Motor neuron (in vitro differentiated cells): ENCODE measurements at regions of chr11 and their contacts with region 1.

Region 1: DNA sequence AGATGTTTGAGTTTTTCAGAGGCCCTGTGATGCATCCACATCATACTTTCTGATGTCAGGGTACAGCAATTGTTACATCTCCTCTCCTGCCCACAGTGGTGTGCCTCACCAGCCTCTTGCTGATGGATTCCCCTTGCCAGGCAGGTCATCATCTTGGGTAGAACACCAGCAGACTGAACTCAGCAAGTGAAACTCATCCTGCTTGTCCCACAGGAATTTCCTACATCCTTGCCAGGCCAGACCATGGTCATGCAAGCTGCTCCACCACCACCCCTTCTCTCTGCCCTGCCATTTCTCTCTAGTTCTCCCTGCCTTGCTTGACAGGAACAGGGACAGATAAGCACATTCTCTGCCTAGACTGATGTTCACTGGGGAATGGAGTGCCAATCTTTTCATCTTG is 85.9 kb downstream of the PAX6 start:
- ATAC-seq: no peak
- H3K4me3 ChIP-seq: no peak overlapping the region
- H3K27ac ChIP-seq: no peak overlapping the region
- H3K4me1 ChIP-seq: peaks cover 0 to 2% of the 10 kb centered on the region in 2 donors

Region 2: GRCh38 chr11:31641477-31642062 is 83.6 kb before region 1 on chr11:
- in situ Hi-C with region 1: loop called in 1 of 9 experiments (anchors 25 kb)
- ATAC-seq: no peak
- H3K4me3 ChIP-seq: no peak overlapping the region
- H3K27ac ChIP-seq: no peak overlapping the region
- H3K4me1 ChIP-seq: peaks cover 0 to 4% of the 10 kb centered on the region in 2 donors